Activated B cell treated with CpG ODN at 0.5 μM for 24 hours (primary cell): ENCODE measurements at regions of chr3 and their contacts with region 1.

Region 1: DNA sequence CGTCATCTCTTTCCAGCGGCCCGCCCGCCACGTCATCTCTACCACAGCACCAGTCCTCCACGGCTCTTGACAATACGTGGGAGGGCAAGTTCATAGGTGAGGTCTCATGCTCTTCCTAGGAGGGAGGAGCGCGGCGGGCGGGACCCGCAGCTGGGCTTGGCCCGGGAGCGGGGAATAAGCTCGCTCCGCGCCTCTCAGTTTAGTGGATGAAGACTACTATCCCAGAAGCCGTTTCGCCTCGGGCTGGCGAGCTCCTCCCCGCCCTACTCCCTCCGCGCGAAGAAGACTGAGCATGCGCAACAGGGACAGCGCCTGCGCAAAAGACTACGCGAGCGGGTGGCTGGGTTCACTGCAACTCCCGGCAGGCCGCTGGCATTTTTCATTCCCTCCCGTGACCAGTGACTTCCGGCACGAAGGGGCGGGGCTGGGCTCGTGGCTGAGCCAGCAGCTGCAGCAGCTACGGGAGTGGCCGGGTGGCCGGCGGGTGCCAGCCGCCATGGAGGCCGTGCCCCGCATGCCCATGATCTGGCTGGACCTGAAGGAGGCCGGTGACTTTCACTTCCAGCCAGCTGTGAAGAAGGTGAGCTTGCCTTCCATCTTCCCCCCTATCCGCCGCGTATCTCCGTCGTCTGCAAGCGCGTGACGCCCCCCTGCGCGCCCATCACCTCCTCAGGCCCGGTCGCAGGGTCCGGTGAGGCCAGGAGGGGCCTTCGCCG is at the start of gene PTPN23:
- DNase-seq: peak; percentile 98
- ATAC-seq: peak; percentile 80
- H3K4me3 Mint-ChIP-seq: peak within 1 kb of the TSS; percentile 95
- H3K27ac Mint-ChIP-seq: peak within 1 kb of the TSS; percentile 96
- H3K4me1 Mint-ChIP-seq: peaks cover 49% of the 10 kb centered on the region
- H3K27me3 Mint-ChIP-seq: no peaks in the 10 kb centered on the region
- CTCF ChIP-seq: no peak
- total RNA-seq, gene PTPN23: 44.0 and 50.3 TPM in 2 replicates

Region 2: GRCh38 chr3:47282424-47283192 is 98.2 kb before region 1 on chr3 and contains the starts of genes KIF9 and KLHL18:
- CTCF ChIA-PET with region 1: no interaction called
- POLR2A ChIA-PET with region 1: interaction called, 6 read pairs
- intact Hi-C with region 1: loop called (anchors 1 kb)
- DNase-seq: peak; percentile 93
- ATAC-seq: peak; percentile 82
- H3K4me3 Mint-ChIP-seq: peak within 1 kb of the TSS; percentile 100
- H3K27ac Mint-ChIP-seq: peak within 1 kb of the TSS; percentile 99
- H3K4me1 Mint-ChIP-seq: peaks cover 53% of the 10 kb centered on the region
- H3K27me3 Mint-ChIP-seq: no peaks in the 10 kb centered on the region
- CTCF ChIP-seq: no peak
- total RNA-seq, gene KIF9: 2.3 and 2.5 TPM in 2 replicates
- total RNA-seq, gene KLHL18: 36.6 and 38.0 TPM in 2 replicates

Region 3: DNA sequence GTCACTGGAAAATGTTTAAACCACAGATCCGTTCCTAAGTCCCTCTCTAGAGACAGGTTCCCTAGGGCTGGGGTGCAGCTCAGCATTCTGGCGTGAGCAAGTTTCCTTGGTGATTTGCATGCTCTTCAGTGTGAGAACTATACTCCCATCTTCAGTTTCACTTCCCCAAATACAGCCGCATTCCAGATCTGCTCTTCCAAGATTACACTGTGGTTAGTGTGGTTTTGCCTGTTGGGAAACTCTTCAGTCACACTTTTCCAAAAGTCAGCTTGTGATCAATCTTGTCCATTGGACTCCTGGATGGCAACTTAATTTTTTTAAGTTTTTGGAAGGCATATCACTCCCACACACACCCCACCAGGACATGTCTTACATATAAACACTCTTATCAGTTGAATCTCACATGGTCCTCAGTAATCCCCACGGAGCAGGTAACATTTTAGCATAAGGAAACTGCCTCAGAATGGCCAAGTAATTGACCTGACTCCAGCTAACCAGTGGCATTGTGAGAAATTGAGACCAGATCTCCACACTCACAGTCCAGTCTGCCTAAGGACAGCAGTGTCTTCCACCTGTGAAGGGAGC is 33.5 kb before region 1 on chr3:
- CTCF ChIA-PET with region 1: no interaction called
- POLR2A ChIA-PET with region 1: interaction called, 11 read pairs
- intact Hi-C with region 1: loop called (anchors 1 kb)
- DNase-seq: no peak
- ATAC-seq: peak; percentile 89
- H3K4me3 Mint-ChIP-seq: peak overlapping the region; percentile 70
- H3K27ac Mint-ChIP-seq: peak overlapping the region; percentile 72
- H3K4me1 Mint-ChIP-seq: peaks cover 41% of the 10 kb centered on the region
- H3K27me3 Mint-ChIP-seq: no peaks in the 10 kb centered on the region
- CTCF ChIP-seq: no peak

Region 4: DNA sequence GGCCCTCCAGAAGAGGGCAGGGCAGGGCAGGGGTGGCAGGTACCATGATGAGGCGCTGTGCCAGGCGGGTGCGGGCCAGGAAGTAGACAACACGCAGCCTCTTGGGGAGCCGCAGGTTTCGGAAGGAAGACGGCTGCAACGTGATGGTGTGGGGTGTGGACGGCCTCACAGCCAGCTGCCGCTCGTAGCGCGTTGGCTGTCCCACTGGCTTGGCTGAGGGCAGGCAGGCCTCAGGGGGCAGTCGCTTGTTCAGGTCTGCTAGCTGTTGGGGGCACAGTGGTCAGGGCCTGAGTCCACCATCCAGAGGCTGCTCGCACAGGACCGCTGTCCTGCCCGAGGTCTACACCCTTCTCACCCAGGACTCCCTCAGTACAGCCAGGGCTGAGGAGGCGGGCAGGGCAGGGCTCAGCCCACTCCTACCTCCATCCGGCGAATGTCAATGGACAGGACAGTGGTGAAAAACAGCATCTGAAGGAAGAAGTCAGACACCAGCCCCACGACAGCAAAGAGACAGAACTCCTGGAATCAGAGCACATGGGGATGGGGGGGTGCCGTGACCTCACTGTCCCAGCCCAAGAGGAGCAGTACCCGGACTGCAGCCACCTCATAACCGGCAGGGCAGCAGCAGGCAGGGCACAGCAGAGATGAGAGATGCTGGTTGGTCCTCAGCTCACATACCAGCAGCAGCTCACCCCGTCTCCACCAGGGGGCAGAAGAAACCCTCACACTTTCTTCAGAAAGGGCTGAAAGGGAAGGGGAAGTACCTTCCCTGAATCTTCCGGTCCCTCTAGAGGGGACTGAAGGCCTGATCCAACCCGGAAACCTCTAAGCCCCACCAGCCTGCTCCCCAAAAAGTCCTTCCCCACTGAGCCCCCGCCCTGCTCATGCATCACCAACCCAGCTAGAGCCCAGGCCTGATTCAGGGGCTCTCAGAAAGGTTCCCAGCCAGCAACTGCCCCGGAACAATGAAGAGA is 40.0 kb after region 1 on chr3:
- CTCF ChIA-PET with region 1: interaction called, 5 read pairs
- POLR2A ChIA-PET with region 1: interaction called, 9 read pairs
- intact Hi-C with region 1: loop called (anchors 1 kb)
- DNase-seq: peak; percentile 75
- ATAC-seq: peak; percentile 98
- H3K4me3 Mint-ChIP-seq: peak overlapping the region; percentile 75
- H3K27ac Mint-ChIP-seq: peak overlapping the region; percentile 98
- H3K4me1 Mint-ChIP-seq: peaks cover 16% of the 10 kb centered on the region
- H3K27me3 Mint-ChIP-seq: no peaks in the 10 kb centered on the region
- CTCF ChIP-seq: no peak

Region 5: DNA sequence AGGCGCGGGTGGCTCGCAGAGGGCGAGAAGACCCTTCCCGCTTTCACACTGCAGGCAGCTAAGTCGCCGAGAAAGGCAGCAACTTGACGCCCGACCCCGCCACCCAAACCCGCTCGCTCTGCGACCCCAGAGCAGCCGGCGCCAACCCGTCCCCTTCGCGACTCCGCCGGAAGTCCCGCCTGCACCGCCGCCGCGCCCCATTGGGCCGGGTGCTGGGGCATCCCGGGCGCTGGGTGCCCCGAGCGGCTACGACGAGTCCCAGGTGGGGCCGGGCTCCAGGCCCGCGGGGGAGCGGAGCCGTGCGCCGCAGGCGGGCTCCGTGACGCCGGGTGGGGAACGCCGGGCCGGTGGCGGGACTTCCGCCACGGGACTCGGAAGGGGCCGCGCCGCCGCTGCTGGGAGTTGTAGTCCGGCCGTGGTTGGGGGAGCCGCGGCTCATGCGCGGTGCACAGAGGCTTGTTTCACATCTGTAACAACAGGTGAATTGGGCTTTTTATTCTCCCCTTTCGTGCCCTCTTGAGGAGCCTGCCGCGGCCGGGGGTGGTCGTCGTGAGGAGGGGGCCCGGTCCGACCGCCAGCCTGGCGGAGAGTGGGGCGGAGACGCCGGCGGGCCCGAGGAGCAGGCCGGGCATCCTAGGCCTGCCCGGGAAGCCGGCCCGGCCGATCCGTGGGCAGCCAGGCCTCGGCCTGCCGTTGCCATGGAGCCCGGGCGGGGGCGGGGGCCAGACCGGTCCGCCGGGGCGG is 422.1 kb after region 1 on chr3 and contains the start of gene DHX30:
- CTCF ChIA-PET with region 1: no interaction called
- POLR2A ChIA-PET with region 1: no interaction called
- intact Hi-C with region 1: no loop called
- DNase-seq: peak; percentile 87
- ATAC-seq: peak; percentile 93
- H3K4me3 Mint-ChIP-seq: peak within 1 kb of the TSS; percentile 93
- H3K27ac Mint-ChIP-seq: peak within 1 kb of the TSS; percentile 92
- H3K4me1 Mint-ChIP-seq: peaks cover 20% of the 10 kb centered on the region
- H3K27me3 Mint-ChIP-seq: no peaks in the 10 kb centered on the region
- CTCF ChIP-seq: no peak
- total RNA-seq, gene DHX30: 71.3 and 77.4 TPM in 2 replicates